Pancreas (tissue), 10 donors: ENCODE measurements at regions of chr2 and their contacts with region 1.

Region 1: DNA sequence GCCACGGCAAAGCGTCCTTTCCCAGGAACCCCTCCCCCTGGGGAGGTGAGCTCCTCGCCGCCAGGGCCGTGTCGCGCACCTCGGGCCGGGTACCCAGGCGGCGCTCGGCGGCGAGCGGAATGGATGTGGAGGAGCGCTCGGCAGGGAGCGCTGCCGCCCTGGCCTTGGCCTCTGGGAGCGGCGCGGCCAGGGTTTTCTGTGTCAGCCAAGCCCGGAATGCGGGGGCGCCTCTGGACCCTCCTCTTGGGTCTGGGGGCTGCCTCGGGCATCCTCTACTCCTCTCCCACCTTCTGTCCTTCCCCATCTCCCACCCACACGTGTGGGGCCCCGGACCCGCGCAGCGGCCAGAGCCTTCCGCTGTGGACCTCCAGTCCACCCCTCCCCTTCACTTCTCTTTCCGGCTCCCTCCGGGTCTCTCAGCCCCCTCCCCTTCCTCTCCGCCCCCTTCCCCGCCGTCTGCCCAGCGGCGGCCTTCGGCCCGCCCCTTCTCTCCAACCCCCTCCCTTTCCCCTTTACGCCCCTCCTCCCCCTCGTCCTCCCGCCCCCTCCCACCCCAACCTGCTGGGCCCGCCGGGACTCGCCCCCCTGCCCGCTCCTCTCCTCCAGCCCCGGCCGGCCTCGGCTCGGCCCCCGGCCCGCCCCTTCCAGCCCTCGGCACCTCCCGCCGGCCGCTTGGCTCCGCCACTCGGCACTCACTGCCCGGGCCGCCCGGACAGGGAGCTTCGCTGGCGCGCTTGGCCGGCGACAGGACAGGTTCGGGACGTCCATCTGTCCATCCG is at the start of gene MERTK:
- DNase-seq: peak; percentile 84 to 95 (median 91)
- ATAC-seq: peak; percentile 87 to 94 (median 89)
- H3K4me3 ChIP-seq: peak within 1 kb of the TSS; percentile 67 to 97 (median 84)
- H3K27ac ChIP-seq: peak within 1 kb of the TSS; percentile 35 to 88 (median 68)
- H3K4me1 ChIP-seq: peaks cover 0 to 4% (median 3%) of the 10 kb centered on the region in 3 donors
- H3K27me3 ChIP-seq: no peaks in the 10 kb centered on the region
- CTCF ChIP-seq: peak in 2 of 4 donors; percentile 20 to 41
- total RNA-seq, gene MERTK: 4.5 to 13.9 (median 6.4) TPM

Region 2: DNA sequence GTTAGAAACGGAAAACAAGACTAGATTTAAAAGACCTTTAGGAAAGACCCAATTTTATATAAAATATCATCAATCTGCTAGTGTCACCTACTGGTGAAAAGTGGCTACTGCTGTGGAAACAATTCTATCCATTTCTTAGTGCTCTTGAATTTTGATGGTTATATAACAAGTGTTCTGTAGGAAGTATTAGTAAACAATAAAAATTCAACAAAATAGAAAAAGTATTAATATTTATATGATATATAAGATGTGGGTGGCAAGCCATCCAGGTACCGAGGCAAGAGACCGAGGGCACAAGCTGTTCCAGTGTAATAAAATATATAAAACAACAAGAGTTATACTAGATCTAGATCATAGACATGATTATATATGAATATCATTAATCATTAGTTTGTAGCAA is 150.8 kb after region 1 on chr2:
- intact Hi-C with region 1: loop called (anchors 5 to 10 kb)
- DNase-seq: peak in 2 of 6 donors; percentile 42 to 48
- ATAC-seq: peak; percentile 81 to 95 (median 91)
- H3K4me3 ChIP-seq: no peak overlapping the region
- H3K27ac ChIP-seq: no peak overlapping the region
- H3K4me1 ChIP-seq: peaks cover 13 to 19% (median 13%) of the 10 kb centered on the region in 3 donors
- H3K27me3 ChIP-seq: no peaks in the 10 kb centered on the region
- CTCF ChIP-seq: peak; percentile 48 to 82 (median 74)

Region 3: GRCh38 chr2:112054847-112055729 is 157.0 kb after region 1 on chr2 and contains the start of gene TMEM87B:
- intact Hi-C with region 1: loop called in 1 of 3 experiments (anchors 5 kb)
- DNase-seq: peak; percentile 98 to 100 (median 99)
- ATAC-seq: peak; percentile 78 to 84 (median 81)
- H3K4me3 ChIP-seq: peak within 1 kb of the TSS; percentile 77 to 93 (median 92)
- H3K27ac ChIP-seq: peak within 1 kb of the TSS; percentile 78 to 98 (median 96)
- H3K4me1 ChIP-seq: peaks cover 4 to 15% (median 14%) of the 10 kb centered on the region in 3 donors
- H3K27me3 ChIP-seq: no peaks in the 10 kb centered on the region
- CTCF ChIP-seq: no peak
- total RNA-seq, gene TMEM87B: 10.1 to 21.7 (median 14.0) TPM